Adrenal gland (tissue), 19 donors: ENCODE measurements at regions of chr11 and their contacts with region 1.

Region 1: GRCh38 chr11:72321381-72321996 is 77.5 kb upstream of the PHOX2A start:
- DNase-seq: peak in 1 of 7 donors; percentile 70
- H3K4me3 ChIP-seq: no peak overlapping the region
- H3K27ac ChIP-seq: no peak overlapping the region
- H3K4me1 ChIP-seq: peaks cover 0 to 16% of the 10 kb centered on the region in 2 donors
- H3K27me3 ChIP-seq: no peaks in the 10 kb centered on the region
- CTCF ChIP-seq: no peak
- POLR2A ChIP-seq: no peak

Region 2: DNA sequence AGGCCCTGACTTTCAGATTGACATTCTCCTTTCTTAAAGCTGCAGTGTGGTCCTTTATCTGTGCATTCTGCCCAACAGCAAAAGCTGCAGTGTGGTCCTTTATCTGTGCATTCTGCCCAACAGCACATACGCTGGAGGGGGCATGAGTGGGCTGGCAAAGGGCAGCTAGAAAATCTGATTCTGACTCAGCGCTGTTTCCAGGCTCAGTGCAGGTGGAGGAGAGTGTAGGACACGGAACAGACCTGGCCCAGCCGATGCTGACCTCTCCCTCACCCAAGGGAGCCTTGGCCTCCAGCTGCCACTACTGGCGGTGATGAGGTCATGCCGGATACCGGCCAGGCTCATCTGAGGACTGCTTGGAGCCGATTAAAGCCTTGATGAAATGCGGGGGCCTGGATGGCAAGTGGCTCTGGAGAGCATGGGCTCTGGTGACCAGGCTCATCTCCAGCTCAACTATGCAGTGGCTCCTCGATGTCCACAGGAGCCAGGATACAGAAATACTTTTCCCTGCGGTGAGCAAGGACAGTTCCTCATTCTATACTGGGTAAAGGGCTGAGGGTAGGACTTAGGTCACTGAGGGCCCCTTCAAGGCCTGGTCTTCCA is 28.2 kb after region 1 on chr11:
- intact Hi-C with region 1: loop called in 1 of 2 experiments (anchors 2 kb)
- DNase-seq: peak; percentile 33 to 90 (median 71)
- H3K4me3 ChIP-seq: no peak overlapping the region
- H3K27ac ChIP-seq: peak overlapping the region in 1 of 5 donors; percentile 54
- H3K4me1 ChIP-seq: peaks cover 0 to 34% of the 10 kb centered on the region in 2 donors
- H3K27me3 ChIP-seq: no peaks in the 10 kb centered on the region
- CTCF ChIP-seq: no peak
- POLR2A ChIP-seq: no peak

Region 3: GRCh38 chr11:72454791-72455190 is 133.3 kb after region 1 on chr11:
- intact Hi-C with region 1: no loop called
- DNase-seq: no peak
- H3K4me3 ChIP-seq: no peak overlapping the region
- H3K27ac ChIP-seq: no peak overlapping the region
- H3K4me1 ChIP-seq: no peaks in the 10 kb centered on the region
- H3K27me3 ChIP-seq: no peaks in the 10 kb centered on the region
- CTCF ChIP-seq: no peak
- POLR2A ChIP-seq: no peak